ENCODE measurements at regions of chr19 and their contacts with region 1.

Region 1: DNA sequence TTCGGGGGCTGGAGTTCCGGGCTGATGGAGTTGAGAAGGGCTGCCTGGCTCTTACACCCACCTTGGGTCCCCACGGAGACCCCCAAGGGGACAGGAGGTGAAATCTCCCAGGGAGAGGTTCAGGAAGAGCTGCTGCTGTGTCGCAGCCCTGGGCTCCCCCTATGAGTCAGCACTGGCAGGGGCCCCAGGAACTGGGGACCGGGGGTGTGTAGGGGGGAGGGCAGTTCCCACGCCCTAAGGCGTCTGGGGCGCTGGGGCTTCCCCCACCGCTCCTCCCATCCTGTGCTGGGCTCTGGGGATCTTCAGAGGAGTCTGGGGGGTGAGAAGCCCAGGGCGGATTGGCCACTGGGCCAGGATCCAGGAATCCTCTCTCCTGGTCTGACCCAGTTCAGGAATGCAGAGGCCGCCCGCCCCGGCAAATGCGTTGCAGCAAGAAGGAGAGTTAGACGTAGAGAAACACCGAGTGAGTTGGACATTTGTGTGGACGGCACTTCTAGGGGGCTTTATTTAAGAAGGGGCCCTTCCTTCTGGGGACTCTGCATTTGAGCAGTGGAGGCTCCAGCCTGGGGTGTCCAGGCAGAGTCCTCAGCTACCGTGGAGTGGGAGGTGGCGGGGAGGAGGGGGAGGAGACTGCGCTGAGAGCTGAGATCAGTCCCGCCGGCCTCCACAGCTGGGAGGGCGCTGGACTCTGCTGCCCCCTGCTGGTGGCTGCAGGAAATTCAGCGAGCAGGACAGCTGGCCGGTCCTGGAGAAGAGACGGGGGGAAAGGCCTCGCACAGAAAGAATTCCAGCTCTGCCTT is 15.0 kb upstream of the NANOS3 start:
- DNase-seq: peak; percentile 92
- ATAC-seq: peak; percentile 82
- H3K4me3 Mint-ChIP-seq: peak overlapping the region; percentile 91
- H3K27ac Mint-ChIP-seq: peak overlapping the region; percentile 80
- H3K4me1 Mint-ChIP-seq: peaks cover 28% of the 10 kb centered on the region
- H3K27me3 Mint-ChIP-seq: peaks cover 26% of the 10 kb centered on the region
- CTCF ChIP-seq: peak; percentile 96

Region 2: GRCh38 chr19:12974301-12975220 is 887.4 kb before region 1 on chr19:
- CTCF ChIA-PET with region 1: no interaction called
- POLR2A ChIA-PET with region 1: no interaction called
- intact Hi-C with region 1: loop called (anchors 5 kb)
- DNase-seq: no peak
- ATAC-seq: no peak
- H3K4me3 Mint-ChIP-seq: no peak overlapping the region
- H3K27ac Mint-ChIP-seq: no peak overlapping the region
- H3K4me1 Mint-ChIP-seq: peaks cover 6% of the 10 kb centered on the region
- H3K27me3 Mint-ChIP-seq: peaks cover 7% of the 10 kb centered on the region
- CTCF ChIP-seq: no peak

Region 3: GRCh38 chr19:13597640-13598039 is 264.3 kb before region 1 on chr19:
- CTCF ChIA-PET with region 1: interaction called, 10 read pairs
- POLR2A ChIA-PET with region 1: no interaction called
- intact Hi-C with region 1: loop called (anchors 1 kb)
- DNase-seq: no peak
- ATAC-seq: peak; percentile 95
- H3K4me3 Mint-ChIP-seq: no peak overlapping the region
- H3K27ac Mint-ChIP-seq: no peak overlapping the region
- H3K4me1 Mint-ChIP-seq: peaks cover 5% of the 10 kb centered on the region
- H3K27me3 Mint-ChIP-seq: peaks cover 11% of the 10 kb centered on the region
- CTCF ChIP-seq: no peak

Region 4: GRCh38 chr19:13731147-13731964 is 130.6 kb before region 1 on chr19:
- CTCF ChIA-PET with region 1: interaction called, 6 read pairs
- POLR2A ChIA-PET with region 1: interaction called, 10 read pairs
- intact Hi-C with region 1: loop called (anchors 5 kb)
- DNase-seq: peak; percentile 96
- ATAC-seq: peak; percentile 100
- H3K4me3 Mint-ChIP-seq: peak overlapping the region; percentile 90
- H3K27ac Mint-ChIP-seq: peak overlapping the region; percentile 93
- H3K4me1 Mint-ChIP-seq: peaks cover 21% of the 10 kb centered on the region
- H3K27me3 Mint-ChIP-seq: no peaks in the 10 kb centered on the region
- CTCF ChIP-seq: no peak

Region 5: DNA sequence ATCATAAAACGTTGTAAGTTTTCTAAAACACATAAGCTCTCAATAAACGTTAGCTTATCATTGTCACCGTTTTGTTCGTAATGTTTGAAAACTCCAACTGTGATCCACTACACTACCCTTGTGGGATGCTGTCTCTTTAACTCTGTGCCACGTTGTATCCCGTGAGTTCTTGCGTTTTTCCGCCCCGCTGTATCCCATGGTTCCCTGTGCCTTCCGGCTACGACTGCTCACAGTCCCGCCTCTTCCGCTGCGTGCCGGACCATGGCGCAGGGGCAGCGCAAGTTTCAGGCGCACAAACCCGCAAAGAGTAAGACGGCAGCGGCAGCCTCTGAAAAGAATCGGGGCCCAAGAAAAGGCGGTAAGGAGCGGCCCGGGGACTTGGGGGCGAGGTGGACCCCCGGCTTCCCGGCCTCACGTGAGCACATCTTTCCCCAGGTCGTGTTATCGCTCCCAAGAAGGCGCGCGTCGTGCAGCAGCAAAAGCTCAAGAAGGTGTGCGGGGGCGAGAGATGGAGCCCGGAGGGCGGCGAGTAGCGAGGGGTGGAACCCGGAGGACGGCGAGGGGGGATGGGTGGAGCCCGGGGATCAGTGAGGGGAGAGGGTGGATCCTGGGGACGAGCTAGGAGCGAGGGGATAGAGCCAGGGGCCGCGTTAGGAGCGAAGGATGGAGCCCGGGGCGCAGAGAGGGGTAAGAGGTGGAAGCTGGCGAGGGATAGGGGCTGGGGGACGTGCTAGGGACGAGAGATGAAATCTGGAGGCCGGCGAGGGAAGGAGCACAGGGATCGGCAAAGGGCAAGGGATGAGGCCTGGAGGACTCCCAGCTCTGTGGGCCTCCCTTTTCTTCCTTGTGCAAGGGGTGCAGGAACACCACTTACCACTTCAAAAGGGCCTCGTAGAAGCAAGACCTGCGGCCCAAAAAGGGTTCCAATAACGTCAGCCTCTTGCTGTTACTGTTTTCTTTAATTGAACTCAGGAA is 87.4 kb before region 1 on chr19 and contains the start of gene C19orf53:
- CTCF ChIA-PET with region 1: interaction called, 19 read pairs
- POLR2A ChIA-PET with region 1: interaction called, 15 read pairs
- intact Hi-C with region 1: no loop called
- DNase-seq: peak; percentile 86
- ATAC-seq: peak; percentile 99
- H3K4me3 Mint-ChIP-seq: peak within 1 kb of the TSS; percentile 100
- H3K27ac Mint-ChIP-seq: peak within 1 kb of the TSS; percentile 95
- H3K4me1 Mint-ChIP-seq: peaks cover 26% of the 10 kb centered on the region
- H3K27me3 Mint-ChIP-seq: no peaks in the 10 kb centered on the region
- CTCF ChIP-seq: no peak
- total RNA-seq, gene C19orf53: 74.9 and 76.1 TPM in 2 replicates

Region 6: GRCh38 chr19:13794757-13795589 is 67.0 kb before region 1 on chr19 and contains the start of gene ZSWIM4:
- CTCF ChIA-PET with region 1: interaction called, 11 read pairs
- POLR2A ChIA-PET with region 1: interaction called, 16 read pairs
- intact Hi-C with region 1: no loop called
- DNase-seq: peak; percentile 86
- ATAC-seq: peak; percentile 95
- H3K4me3 Mint-ChIP-seq: peak within 1 kb of the TSS; percentile 98
- H3K27ac Mint-ChIP-seq: peak within 1 kb of the TSS; percentile 91
- H3K4me1 Mint-ChIP-seq: peaks cover 32% of the 10 kb centered on the region
- H3K27me3 Mint-ChIP-seq: no peaks in the 10 kb centered on the region
- CTCF ChIP-seq: no peak
- total RNA-seq, gene ZSWIM4: 8.5 and 11.2 TPM in 2 replicates

Region 7: GRCh38 chr19:13839130-13839937 is 22.6 kb before region 1 on chr19:
- CTCF ChIA-PET with region 1: interaction called, 18 read pairs
- POLR2A ChIA-PET with region 1: interaction called, 25 read pairs
- intact Hi-C with region 1: loop called (anchors 1 kb)
- DNase-seq: peak; percentile 70
- ATAC-seq: peak; percentile 45
- H3K4me3 Mint-ChIP-seq: peak overlapping the region; percentile 86
- H3K27ac Mint-ChIP-seq: peak overlapping the region; percentile 92
- H3K4me1 Mint-ChIP-seq: peaks cover 75% of the 10 kb centered on the region
- H3K27me3 Mint-ChIP-seq: no peaks in the 10 kb centered on the region
- CTCF ChIP-seq: no peak

Measured in activated B cell treated with CpG ODN at 0.5 μM for 24 hours (primary cell).